ENCODE measurements at regions of chr3 and their contacts with region 1.

Region 1: DNA sequence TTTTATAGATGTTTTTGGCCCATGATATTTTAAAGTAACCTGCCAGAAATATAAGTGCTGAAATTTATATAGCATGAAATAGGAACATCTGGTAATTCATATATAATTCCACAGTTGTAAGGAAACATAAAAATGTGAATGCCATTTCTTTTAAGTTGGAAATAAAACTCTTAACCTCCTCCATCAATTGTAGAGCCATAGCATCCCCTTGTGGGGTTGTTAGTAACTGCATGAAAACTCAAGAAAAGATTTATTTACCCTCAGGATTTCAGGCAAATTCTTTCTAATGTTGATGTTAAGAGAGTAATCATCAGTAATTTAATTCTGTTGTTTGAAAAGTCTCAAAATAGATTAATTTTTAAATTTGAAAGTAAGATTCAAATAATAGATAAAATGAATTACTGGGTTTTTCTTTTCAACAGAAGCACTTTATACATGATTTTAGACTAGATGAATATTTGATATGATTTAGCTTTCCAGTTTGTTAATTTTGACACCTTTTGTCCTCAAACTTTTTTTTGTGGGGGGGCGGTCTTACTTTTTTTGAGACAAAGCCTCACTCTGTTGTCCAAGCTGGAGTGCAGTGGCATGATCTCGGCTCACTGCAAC is 74.7 kb downstream of the RASA2 start:
- DNase-seq: no peak
- H3K4me3 ChIP-seq: no peak overlapping the region
- H3K27ac ChIP-seq: no peak overlapping the region
- H3K4me1 ChIP-seq: no peaks in the 10 kb centered on the region
- H3K27me3 ChIP-seq: no peaks in the 10 kb centered on the region
- CTCF ChIP-seq: peak; percentile 69 to 99 (median 96)
- POLR2A ChIP-seq: no peak

Region 2: GRCh38 chr3:141303481-141304223 is 257.9 kb before region 1 on chr3:
- intact Hi-C with region 1: loop called (anchors 10 kb)
- DNase-seq: no peak
- H3K4me3 ChIP-seq: no peak overlapping the region
- H3K27ac ChIP-seq: no peak overlapping the region
- H3K4me1 ChIP-seq: peaks cover 0 to 21% (median 0%) of the 10 kb centered on the region in 3 donors
- H3K27me3 ChIP-seq: no peaks in the 10 kb centered on the region
- CTCF ChIP-seq: peak; percentile 75 to 87 (median 83)
- POLR2A ChIP-seq: no peak

Region 3: DNA sequence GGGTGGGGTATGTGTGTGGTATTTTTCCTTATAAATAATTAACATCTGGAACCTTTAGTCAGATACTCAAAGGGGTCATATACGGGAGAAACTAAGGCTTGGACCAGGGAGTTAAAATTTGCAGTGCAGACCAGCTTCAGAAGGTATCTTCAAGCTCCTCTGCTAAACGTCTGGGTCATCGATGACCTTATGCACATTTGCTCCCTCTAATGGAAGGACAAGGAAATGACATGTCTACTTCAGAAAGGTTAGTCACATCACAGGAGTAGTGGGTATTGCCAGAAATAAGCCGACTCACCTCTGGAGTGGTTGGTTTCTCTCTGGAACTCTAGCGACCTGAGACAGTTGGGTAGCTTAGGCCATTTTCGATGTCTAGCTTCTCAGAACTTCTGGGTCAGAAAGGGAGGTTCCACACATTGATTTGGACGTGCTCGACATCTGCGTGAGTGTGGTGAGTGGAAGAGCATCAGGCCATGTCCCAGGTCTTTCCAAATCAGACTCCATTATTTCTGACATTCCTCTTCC is 106.6 kb before region 1 on chr3:
- intact Hi-C with region 1: loop called (anchors 5 kb)
- DNase-seq: no peak
- H3K4me3 ChIP-seq: no peak overlapping the region
- H3K27ac ChIP-seq: no peak overlapping the region
- H3K4me1 ChIP-seq: peaks cover 0 to 23% (median 0%) of the 10 kb centered on the region in 3 donors
- H3K27me3 ChIP-seq: peaks cover 0 to 37% (median 0%) of the 10 kb centered on the region in 4 donors
- CTCF ChIP-seq: peak; percentile 42 to 76 (median 66)
- POLR2A ChIP-seq: no peak

Region 4: DNA sequence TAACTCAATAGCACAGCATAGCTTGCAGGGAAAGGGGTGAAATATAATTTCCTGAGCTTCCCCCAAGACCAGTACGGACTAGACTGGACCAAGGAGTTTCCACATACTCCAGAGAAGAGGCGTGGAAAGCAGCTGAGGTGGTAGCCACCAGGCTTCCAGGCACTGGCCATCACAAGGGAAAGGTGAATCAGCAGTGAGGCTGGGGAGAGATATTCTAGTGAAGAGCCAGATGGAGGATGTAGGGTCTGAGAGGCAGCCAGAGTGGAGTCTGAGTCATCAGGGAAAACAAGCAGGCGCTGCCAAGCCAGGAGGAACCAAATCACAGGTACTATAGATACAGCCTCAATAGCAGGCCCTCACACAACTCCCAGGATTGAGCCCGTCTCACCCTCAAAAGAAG is 84.3 kb before region 1 on chr3:
- intact Hi-C with region 1: loop called (anchors 5 kb)
- DNase-seq: no peak
- H3K4me3 ChIP-seq: no peak overlapping the region
- H3K27ac ChIP-seq: no peak overlapping the region
- H3K4me1 ChIP-seq: no peaks in the 10 kb centered on the region
- H3K27me3 ChIP-seq: no peaks in the 10 kb centered on the region
- CTCF ChIP-seq: no peak
- POLR2A ChIP-seq: no peak

Region 5: GRCh38 chr3:141878812-141879211 is 317.3 kb after region 1 on chr3:
- intact Hi-C with region 1: no loop called
- DNase-seq: no peak
- H3K4me3 ChIP-seq: peak overlapping the region; percentile 86 to 98 (median 94)
- H3K27ac ChIP-seq: peak overlapping the region in 3 of 4 donors; percentile 16 to 100 (median 38)
- H3K4me1 ChIP-seq: peaks cover 16 to 77% (median 25%) of the 10 kb centered on the region in 3 donors
- H3K27me3 ChIP-seq: no peaks in the 10 kb centered on the region
- CTCF ChIP-seq: no peak
- POLR2A ChIP-seq: no peak